Panc1 (cell line): ENCODE measurements at regions of chr17 and their contacts with region 1.

Region 1: GRCh38 chr17:31058976-31059375 is 35.8 kb upstream of the NF1 start:
- DNase-seq: no peak
- ATAC-seq: no peak
- H3K4me3 ChIP-seq: no peak overlapping the region
- H3K27ac ChIP-seq: no peak overlapping the region
- H3K4me1 ChIP-seq: no peaks in the 10 kb centered on the region
- H3K27me3 ChIP-seq: no peaks in the 10 kb centered on the region
- CTCF ChIP-seq: no peak

Region 2: DNA sequence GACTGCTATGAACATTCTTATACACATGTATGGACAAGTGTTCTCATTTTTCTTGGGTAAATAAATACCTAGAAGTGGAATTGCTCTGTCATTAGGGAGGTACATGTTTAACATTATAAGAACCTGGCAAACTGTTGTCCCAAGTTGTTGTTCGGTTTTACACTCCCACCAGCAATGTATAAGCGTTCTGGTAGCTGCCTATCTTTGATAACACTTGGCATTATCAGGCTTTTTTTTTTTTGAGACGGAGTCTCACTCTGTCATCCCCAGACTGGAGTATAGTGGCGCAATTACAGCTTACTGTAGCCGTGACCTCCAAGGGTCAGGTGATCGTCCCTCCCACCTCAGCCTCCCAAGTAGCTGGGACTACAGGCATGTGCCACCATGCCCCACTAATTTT is 211.0 kb before region 1 on chr17:
- CTCF ChIA-PET with region 1: no interaction called
- POLR2A ChIA-PET with region 1: no interaction called
- in situ Hi-C with region 1: no loop called
- intact Hi-C with region 1: no loop called
- DNase-seq: no peak
- ATAC-seq: no peak
- H3K4me3 ChIP-seq: no peak overlapping the region
- H3K27ac ChIP-seq: no peak overlapping the region
- H3K4me1 ChIP-seq: no peaks in the 10 kb centered on the region
- H3K27me3 ChIP-seq: no peaks in the 10 kb centered on the region
- CTCF ChIP-seq: no peak

Region 3: DNA sequence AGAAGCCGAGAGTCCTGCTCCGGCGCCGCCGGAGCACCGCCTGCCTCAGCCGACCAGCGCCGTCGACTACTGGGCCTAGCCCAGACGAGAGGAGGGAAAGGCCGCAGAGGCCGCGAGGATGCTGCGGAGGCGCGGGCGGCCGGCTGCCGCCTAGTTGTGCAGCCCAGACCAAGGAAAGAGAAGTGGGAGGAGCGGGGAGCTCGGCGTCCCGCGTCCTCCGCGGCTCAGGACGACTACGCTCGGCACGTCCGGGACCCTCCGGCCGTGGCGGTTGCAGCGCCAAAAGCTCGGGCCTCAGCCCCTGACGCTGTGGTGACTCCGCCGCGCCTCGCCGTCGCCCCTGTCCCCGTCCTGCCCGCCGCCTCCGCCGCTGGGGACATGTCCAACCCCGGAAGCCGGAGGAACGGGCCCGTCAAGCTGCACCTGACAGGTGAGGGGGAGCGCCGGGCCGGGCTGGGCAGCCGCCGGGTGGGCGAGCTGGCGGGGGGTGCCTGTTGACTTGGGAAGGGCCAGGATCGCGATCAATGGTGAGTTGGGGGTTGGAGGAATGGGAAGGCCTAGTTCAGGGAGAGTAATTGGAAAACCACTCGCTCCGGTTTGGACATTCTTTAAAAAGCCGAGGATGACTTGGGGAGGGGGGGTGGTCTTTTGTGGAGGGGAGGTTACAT is 50.5 kb before region 1 on chr17:
- CTCF ChIA-PET with region 1: no interaction called
- POLR2A ChIA-PET with region 1: interaction called, 12 read pairs
- in situ Hi-C with region 1: no loop called
- intact Hi-C with region 1: no loop called
- DNase-seq: no peak
- ATAC-seq: peak; percentile 90
- H3K4me3 ChIP-seq: peak overlapping the region; percentile 43 to 63
- H3K27ac ChIP-seq: peak overlapping the region; percentile 62
- H3K4me1 ChIP-seq: no peaks in the 10 kb centered on the region
- H3K27me3 ChIP-seq: no peaks in the 10 kb centered on the region
- CTCF ChIP-seq: no peak

Region 4: DNA sequence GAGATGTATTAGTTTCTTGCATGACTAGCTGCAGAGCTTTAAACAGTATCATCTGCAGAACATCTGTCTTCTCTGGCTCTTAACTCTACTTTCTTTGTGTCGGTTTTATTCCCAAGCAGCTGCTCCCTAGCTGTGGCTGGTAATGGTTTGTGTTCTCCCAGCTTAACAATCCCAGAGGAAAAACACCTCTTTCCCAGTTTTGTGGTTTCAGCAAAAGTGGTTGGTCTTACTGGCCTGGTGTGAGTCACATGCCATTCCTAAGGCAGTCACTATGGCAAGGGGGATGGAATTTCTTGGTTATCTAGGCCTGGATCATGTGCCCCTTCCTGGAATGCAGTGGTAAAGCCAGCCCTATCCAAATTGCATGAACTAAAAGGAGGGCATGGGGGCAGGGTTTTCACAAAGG is 210.6 kb after region 1 on chr17:
- CTCF ChIA-PET with region 1: no interaction called
- POLR2A ChIA-PET with region 1: no interaction called
- in situ Hi-C with region 1: no loop called
- intact Hi-C with region 1: no loop called
- DNase-seq: peak; percentile 24
- ATAC-seq: peak; percentile 97
- H3K4me3 ChIP-seq: no peak overlapping the region
- H3K27ac ChIP-seq: no peak overlapping the region; the same call in 1 of the 2 replicates
- H3K4me1 ChIP-seq: peaks cover 9% of the 10 kb centered on the region; the same call in 1 of the 2 replicates
- H3K27me3 ChIP-seq: no peaks in the 10 kb centered on the region
- CTCF ChIP-seq: no peak